Activated CD4-positive, alpha-beta T cell treated with anti-CD3 and anti-CD28 coated beads for 36 hours (primary cell): ENCODE measurements at regions of chr2 and their contacts with region 1.

Region 1: GRCh38 chr2:127737892-127738291 is 36.6 kb downstream of the SFT2D3 start:
- DNase-seq: no peak
- ATAC-seq: peak; percentile 79
- H3K4me3 Mint-ChIP-seq: no peak overlapping the region
- H3K27ac Mint-ChIP-seq: no peak overlapping the region
- H3K4me1 Mint-ChIP-seq: peaks cover 43% of the 10 kb centered on the region
- H3K27me3 Mint-ChIP-seq: no peaks in the 10 kb centered on the region

Region 2: DNA sequence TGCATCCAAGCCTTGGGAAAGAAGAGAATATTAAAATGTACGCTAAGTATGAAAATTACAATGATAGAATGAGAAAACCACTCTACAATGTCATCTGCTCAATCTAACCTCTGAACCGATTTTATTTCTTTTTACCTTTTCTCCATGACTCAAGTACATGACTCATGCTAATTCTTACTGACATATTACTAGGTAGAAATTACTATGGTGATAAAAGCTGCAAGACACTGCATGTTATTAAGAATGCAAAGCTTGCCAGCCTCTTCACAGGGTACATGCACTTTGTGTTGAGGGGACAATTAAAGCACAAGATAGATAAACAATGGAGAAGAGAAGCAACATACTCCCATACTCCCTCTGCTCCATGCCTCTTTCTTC is 15.9 kb before region 1 on chr2:
- CTCF ChIA-PET with region 1: interaction called, 4 read pairs
- POLR2A ChIA-PET with region 1: interaction called, 3 read pairs
- intact Hi-C with region 1: loop called in 1 of 2 experiments (anchors 2 kb)
- DNase-seq: no peak
- ATAC-seq: peak; percentile 42
- H3K4me3 Mint-ChIP-seq: no peak overlapping the region
- H3K27ac Mint-ChIP-seq: peak overlapping the region; percentile 63
- H3K4me1 Mint-ChIP-seq: peaks cover 10% of the 10 kb centered on the region
- H3K27me3 Mint-ChIP-seq: no peaks in the 10 kb centered on the region

Region 3: DNA sequence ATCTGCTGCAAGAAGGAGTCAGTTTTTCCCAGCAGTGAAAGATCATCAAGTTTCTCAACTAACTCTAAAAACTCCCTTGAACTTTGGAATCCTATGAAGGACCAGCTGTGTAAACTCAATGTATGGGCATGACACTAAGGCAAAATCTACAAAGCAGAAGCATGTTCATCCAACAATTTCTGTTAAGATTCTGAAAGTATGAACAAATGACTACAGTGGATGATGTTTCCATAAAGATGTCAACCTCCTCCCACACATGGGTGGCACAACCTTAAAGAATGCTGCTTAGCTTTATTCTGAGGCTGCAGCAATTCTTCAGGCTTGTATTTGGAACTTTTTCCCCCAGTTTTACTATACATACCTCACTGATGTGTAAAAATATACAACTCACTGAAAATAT is 25.9 kb after region 1 on chr2:
- CTCF ChIA-PET with region 1: no interaction called
- POLR2A ChIA-PET with region 1: no interaction called
- intact Hi-C with region 1: no loop called
- DNase-seq: no peak
- ATAC-seq: no peak
- H3K4me3 Mint-ChIP-seq: no peak overlapping the region
- H3K27ac Mint-ChIP-seq: peak overlapping the region; percentile 60
- H3K4me1 Mint-ChIP-seq: peaks cover 16% of the 10 kb centered on the region
- H3K27me3 Mint-ChIP-seq: no peaks in the 10 kb centered on the region